ENCODE measurements at regions of chr20 and their contacts with region 1.

Region 1: GRCh38 chr20:51326201-51326819 is 216.2 kb downstream of the NFATC2 start:
- DNase-seq: peak; percentile 54
- CTCF ChIP-seq: no peak

Region 2: GRCh38 chr20:50992733-50993457 is 333.4 kb before region 1 on chr20:
- in situ Hi-C with region 1: loop called (anchors 10 kb)
- DNase-seq: peak; percentile 65
- CTCF ChIP-seq: peak; percentile 22

Region 3: DNA sequence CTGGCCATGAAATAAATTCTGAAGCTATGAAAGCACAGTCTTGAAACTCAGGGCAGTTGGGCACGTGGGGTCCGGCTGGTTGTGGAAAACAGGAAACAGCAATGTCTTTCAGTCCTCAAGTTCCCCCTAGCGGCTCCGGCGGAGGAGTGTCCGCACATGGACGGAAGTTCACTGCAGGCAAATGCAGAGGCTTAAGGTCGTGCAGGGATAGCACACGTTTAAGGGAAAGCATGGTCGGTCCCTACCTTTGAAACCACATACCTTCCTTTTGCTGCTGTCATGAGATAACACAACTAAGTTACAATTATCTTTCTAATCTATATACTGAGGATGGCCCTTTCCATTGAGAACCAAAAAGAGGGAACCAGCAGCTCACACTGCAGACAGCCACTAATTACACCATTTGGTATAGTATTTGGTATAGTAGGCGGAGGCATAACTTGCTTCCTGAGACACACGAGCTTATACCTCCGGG is 268.8 kb after region 1 on chr20:
- in situ Hi-C with region 1: no loop called
- DNase-seq: peak; percentile 86
- CTCF ChIP-seq: peak; percentile 89

Measured in GM13976 (cell line).